ENCODE measurements at regions of chr12 and their contacts with region 1.

Region 1: DNA sequence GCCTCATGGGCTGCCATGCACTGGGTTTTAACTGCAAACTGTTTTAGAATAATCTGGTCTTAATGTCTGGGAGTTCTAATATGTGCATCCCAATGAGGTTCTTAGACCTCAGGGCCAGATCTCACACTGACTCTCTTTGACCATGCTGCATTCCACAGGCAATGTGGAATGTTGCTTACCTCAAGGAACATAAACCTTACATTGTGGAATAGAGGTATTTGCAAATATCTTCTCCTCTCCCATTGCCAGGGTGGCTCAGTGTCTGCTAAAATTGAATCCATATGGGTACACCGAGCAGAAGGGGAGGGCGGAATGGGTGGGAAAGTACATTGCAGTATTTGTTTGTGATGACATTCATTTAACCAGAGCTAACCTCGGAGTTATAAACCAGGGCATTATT is 78.6 kb downstream of the CHST11 start:
- DNase-seq: no peak
- ATAC-seq: no peak
- H3K4me3 ChIP-seq: no peak overlapping the region
- H3K27ac ChIP-seq: no peak overlapping the region
- H3K4me1 ChIP-seq: no peaks in the 10 kb centered on the region
- H3K27me3 ChIP-seq: no peaks in the 10 kb centered on the region
- CTCF ChIP-seq: no peak

Region 2: GRCh38 chr12:104329707-104330532 is 205.4 kb before region 1 on chr12:
- intact Hi-C with region 1: no loop called
- DNase-seq: no peak
- ATAC-seq: peak in 1 of 4 donors; percentile 7
- H3K4me3 ChIP-seq: no peak overlapping the region
- H3K27ac ChIP-seq: no peak overlapping the region
- H3K4me1 ChIP-seq: no peaks in the 10 kb centered on the region
- H3K27me3 ChIP-seq: no peaks in the 10 kb centered on the region
- CTCF ChIP-seq: no peak

Region 3: GRCh38 chr12:104591247-104591940 is 56.0 kb after region 1 on chr12:
- intact Hi-C with region 1: loop called in 1 of 2 experiments (anchors 5 kb)
- DNase-seq: no peak
- ATAC-seq: no peak
- H3K4me3 ChIP-seq: no peak overlapping the region
- H3K27ac ChIP-seq: no peak overlapping the region
- H3K4me1 ChIP-seq: no peaks in the 10 kb centered on the region
- H3K27me3 ChIP-seq: no peaks in the 10 kb centered on the region
- CTCF ChIP-seq: no peak